Activated B cell treated with CpG ODN at 0.5 μM for 24 hours (primary cell): ENCODE measurements at regions of chr12 and their contacts with region 1.

Region 1: DNA sequence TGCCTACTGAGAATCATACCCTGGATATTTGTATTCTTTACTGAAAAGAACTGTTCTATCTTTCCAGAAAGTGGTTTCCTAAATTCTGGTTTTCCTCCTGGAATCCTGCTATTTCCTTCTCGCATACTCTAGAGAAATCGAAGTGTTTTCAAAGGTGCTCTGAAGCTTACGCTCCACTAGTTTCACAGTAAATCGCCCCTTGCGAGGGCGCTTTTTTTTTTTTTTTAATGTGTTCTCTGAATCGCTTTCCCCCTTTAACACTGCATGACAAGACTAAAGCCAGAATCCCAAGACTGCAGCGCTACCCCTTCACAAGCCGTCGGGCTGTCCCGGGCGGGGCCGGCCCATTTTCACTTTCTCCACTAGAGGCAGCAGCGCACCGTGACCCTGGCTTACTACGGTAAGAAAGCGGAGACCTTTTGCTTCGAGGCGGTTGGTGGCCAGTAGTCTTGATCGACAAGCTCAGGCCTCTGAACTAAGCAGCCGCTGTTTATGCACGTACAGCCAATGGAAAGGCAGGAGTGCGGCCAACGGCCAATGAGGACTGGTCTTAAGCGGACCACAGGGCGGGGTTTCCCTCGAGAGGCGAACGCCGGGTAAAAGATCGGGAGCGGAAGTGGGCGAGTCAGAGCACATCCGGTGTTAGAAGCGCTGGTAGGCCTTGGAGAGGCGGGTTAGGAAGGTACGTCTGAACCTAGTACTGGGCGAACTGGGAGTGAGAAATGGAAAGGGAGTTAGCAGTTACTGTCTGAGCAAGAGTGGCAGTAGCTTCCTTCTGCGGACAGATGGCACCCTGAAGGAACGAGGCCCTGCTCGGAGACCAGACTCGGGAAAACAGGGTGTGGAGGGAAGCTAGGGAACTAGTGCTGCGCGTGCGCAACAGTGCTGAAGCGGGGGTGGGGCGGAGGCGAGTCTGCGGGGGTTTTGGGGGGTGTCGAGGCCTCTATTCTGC is at the start of gene TMBIM6:
- DNase-seq: peak; percentile 92
- ATAC-seq: peak; percentile 91
- H3K4me3 Mint-ChIP-seq: peak within 1 kb of the TSS; percentile 95
- H3K27ac Mint-ChIP-seq: peak within 1 kb of the TSS; percentile 98
- H3K4me1 Mint-ChIP-seq: peaks cover 49% of the 10 kb centered on the region
- H3K27me3 Mint-ChIP-seq: no peaks in the 10 kb centered on the region
- CTCF ChIP-seq: no peak
- total RNA-seq, gene TMBIM6: 355 and 366 TPM in 2 replicates

Region 2: GRCh38 chr12:49636979-49637755 is 104.0 kb before region 1 on chr12:
- CTCF ChIA-PET with region 1: interaction called, 13 read pairs
- POLR2A ChIA-PET with region 1: interaction called, 6 read pairs
- intact Hi-C with region 1: no loop called
- DNase-seq: peak; percentile 22
- ATAC-seq: peak; percentile 94
- H3K4me3 Mint-ChIP-seq: no peak overlapping the region
- H3K27ac Mint-ChIP-seq: peak overlapping the region; percentile 22
- H3K4me1 Mint-ChIP-seq: peaks cover 27% of the 10 kb centered on the region
- H3K27me3 Mint-ChIP-seq: no peaks in the 10 kb centered on the region
- CTCF ChIP-seq: no peak

Region 3: GRCh38 chr12:49698619-49699545 is 42.3 kb before region 1 on chr12:
- CTCF ChIA-PET with region 1: interaction called, 4 read pairs
- POLR2A ChIA-PET with region 1: interaction called, 20 read pairs
- intact Hi-C with region 1: no loop called
- DNase-seq: peak; percentile 57
- ATAC-seq: peak; percentile 82
- H3K4me3 Mint-ChIP-seq: peak overlapping the region; percentile 84
- H3K27ac Mint-ChIP-seq: peak overlapping the region; percentile 96
- H3K4me1 Mint-ChIP-seq: peaks cover 83% of the 10 kb centered on the region
- H3K27me3 Mint-ChIP-seq: no peaks in the 10 kb centered on the region
- CTCF ChIP-seq: no peak

Region 4: GRCh38 chr12:49763006-49763591 is 21.9 kb after region 1 on chr12:
- CTCF ChIA-PET with region 1: interaction called, 48 read pairs
- POLR2A ChIA-PET with region 1: interaction called, 20 read pairs
- intact Hi-C with region 1: loop called (anchors 1 kb)
- DNase-seq: peak; percentile 59
- ATAC-seq: peak; percentile 83
- H3K4me3 Mint-ChIP-seq: no peak overlapping the region
- H3K27ac Mint-ChIP-seq: peak overlapping the region; percentile 79
- H3K4me1 Mint-ChIP-seq: peaks cover 25% of the 10 kb centered on the region
- H3K27me3 Mint-ChIP-seq: no peaks in the 10 kb centered on the region
- CTCF ChIP-seq: no peak

Region 5: DNA sequence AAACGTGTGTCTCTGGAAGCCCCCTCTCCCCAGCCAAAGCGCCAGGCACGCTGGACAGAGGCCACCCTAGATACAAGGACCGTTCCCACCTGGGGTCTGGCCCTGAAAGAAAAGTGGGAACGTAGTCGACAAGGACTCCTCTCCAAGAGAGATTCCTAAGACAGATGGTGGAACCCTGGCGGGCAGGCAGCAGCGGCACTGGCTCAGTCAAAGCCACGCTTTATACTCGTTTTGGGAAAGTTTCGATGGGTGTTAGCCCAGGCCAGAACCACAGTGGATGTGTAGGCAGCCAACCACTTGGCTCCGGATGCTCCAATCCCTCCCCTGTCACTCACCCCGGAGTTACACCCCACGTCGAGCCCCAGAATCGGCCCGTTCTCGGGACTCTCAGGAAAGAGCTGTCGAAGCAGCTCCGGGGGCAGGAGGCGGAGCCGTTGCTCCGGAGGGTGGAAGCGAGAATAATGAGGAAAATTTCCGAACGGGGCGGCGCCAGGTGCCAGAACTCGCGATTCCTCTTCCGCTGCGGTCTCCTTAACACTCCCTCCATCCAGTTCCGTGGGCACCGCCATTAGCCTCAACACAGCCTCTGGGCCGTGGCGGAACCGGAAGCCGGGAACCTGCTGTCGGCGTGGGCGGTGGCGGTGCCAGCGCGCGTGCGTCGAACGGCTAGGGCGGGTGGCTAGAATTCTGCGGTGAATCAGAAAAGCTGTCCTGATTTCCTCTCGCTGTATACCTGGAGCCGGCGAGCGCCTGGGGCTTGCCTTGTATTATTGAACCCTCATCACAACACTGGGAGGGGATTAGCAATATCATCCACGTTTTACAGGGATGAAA is 101.5 kb after region 1 on chr12 and contains the start of gene BCDIN3D:
- CTCF ChIA-PET with region 1: interaction called, 12 read pairs
- POLR2A ChIA-PET with region 1: interaction called, 24 read pairs
- intact Hi-C with region 1: loop called (anchors 1 kb)
- DNase-seq: peak; percentile 88
- ATAC-seq: peak; percentile 90
- H3K4me3 Mint-ChIP-seq: peak within 1 kb of the TSS; percentile 93
- H3K27ac Mint-ChIP-seq: peak within 1 kb of the TSS; percentile 90
- H3K4me1 Mint-ChIP-seq: peaks cover 34% of the 10 kb centered on the region
- H3K27me3 Mint-ChIP-seq: no peaks in the 10 kb centered on the region
- CTCF ChIP-seq: no peak
- total RNA-seq, gene BCDIN3D: 10.4 and 12.0 TPM in 2 replicates

Region 6: DNA sequence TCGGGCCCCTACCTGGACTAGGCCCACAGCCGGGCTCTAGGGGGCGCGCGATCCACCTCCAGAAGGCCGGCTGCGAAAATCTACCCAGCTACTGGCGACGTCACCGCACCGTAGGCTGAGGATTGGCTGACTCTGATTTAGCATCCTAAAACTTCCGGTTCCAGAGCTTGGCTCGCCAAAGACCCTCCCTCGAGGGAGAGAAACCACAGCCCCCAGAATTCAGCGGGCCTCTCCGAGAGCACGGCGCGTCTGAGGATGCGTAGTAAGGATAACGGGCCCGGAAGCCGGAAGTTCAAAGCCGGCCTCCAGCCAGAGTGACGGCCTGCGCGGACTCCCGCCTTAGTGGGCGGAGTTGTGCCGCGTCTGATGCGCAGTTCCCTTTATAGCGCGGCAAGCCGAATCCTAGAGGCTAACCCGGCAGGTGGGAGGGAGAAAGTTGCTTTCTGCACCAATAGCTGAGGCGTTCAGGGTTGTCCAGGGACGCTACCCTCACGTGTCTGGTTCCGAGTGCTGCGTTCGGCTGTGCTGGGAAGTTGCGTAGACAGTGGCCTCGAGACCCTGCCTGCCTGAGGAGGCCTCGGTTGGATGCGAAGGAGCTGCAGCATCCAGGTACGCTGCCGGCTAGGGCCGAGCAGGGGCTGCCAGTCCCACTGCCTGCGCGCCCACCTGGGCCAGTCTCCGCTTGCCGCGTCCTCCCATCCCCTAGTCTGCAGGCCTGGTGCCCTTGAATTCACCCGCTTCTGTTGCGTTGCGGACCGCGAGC is 370.7 kb after region 1 on chr12 and contains the start of gene COX14:
- CTCF ChIA-PET with region 1: no interaction called
- POLR2A ChIA-PET with region 1: interaction called, 11 read pairs
- intact Hi-C with region 1: loop called (anchors 1 kb)
- DNase-seq: peak; percentile 98
- ATAC-seq: peak; percentile 78
- H3K4me3 Mint-ChIP-seq: peak within 1 kb of the TSS; percentile 97
- H3K27ac Mint-ChIP-seq: peak within 1 kb of the TSS; percentile 95
- H3K4me1 Mint-ChIP-seq: peaks cover 66% of the 10 kb centered on the region
- H3K27me3 Mint-ChIP-seq: no peaks in the 10 kb centered on the region
- CTCF ChIP-seq: no peak
- total RNA-seq, gene COX14: 40.8 and 42.4 TPM in 2 replicates